ENCODE measurements at regions of chr6 and their contacts with region 1.

Region 1: GRCh38 chr6:75526502-75527127 is 33.0 kb upstream of the FILIP1 start:
- DNase-seq: no peak
- ATAC-seq: peak; percentile 89
- H3K4me3 ChIP-seq: no peak overlapping the region
- H3K27ac ChIP-seq: no peak overlapping the region
- H3K4me1 ChIP-seq: peaks cover 23% of the 10 kb centered on the region
- H3K27me3 ChIP-seq: no peaks in the 10 kb centered on the region
- CTCF ChIP-seq: peak; percentile 69

Region 2: GRCh38 chr6:75266716-75267291 is 259.8 kb before region 1 on chr6:
- intact Hi-C with region 1: loop called (anchors 10 kb)
- DNase-seq: no peak
- ATAC-seq: peak; percentile 82
- H3K4me3 ChIP-seq: no peak overlapping the region
- H3K27ac ChIP-seq: no peak overlapping the region
- H3K4me1 ChIP-seq: peaks cover 23% of the 10 kb centered on the region
- H3K27me3 ChIP-seq: no peaks in the 10 kb centered on the region
- CTCF ChIP-seq: peak; percentile 89

Region 3: DNA sequence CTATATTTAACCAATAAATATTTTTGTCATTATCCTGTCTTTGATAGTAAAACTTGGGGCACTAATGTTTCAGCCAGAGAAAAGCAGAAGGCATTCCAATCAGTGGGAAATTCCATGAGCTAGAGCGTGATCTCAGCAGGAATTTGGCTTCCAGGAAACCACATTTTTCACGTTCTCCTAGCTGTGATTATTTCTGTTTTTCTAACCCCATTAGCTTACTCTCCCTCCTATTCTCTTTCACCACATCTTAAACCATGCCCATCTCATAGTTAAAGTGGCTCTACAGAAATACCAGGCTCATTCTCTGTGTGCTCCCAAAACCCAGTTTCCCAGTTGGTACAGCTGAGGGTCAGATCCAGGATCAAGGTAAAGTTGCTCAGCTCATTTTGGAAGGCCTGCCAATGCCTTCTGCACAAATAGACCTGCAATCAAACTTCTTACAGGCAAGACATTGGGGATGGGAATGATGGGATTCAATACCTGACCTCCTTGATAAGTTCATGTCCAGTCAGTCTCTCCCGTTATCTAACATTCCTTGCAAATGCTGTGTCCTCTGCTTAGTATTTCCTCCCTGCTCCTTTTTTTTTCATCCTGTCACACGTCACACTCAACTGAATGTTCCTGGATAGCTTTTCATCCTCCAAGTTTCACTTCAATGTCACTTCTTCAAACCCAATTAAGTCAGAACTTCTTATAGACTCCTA is 209.0 kb before region 1 on chr6:
- intact Hi-C with region 1: no loop called
- DNase-seq: no peak
- ATAC-seq: no peak
- H3K4me3 ChIP-seq: no peak overlapping the region
- H3K27ac ChIP-seq: no peak overlapping the region
- H3K4me1 ChIP-seq: peaks cover 3% of the 10 kb centered on the region
- H3K27me3 ChIP-seq: no peaks in the 10 kb centered on the region
- CTCF ChIP-seq: no peak

Region 4: DNA sequence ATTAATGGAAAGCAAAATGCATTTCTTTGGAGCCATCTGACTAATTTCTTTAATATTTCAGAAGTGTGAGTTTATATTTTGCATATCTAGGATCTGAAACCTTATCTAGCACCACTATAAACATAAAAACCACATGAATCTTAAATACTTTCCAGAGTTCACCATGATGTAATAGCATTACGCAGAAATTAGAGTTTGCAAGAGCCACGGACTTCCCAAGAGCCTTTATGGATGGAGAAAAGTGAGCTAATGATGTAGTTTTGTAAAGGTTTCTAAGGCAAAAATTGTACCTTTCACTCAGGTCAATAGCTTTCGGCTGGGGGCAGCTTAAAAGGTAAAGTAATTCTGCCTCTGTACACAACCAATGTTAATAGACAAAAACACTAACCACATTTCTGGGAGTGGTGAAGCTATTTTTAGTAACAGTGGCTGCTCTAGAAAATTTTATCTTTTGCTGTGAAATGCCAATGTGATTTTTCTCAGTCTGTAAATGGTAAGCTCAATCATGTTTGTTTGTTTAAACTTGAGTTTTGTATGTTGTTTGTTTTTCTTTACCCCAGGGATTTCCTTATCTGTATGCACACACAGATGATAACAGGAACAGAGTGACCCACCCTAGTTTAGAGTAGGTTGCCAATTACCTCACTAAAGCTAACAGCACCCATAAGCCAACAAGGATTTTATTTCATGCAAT is 113.5 kb before region 1 on chr6:
- intact Hi-C with region 1: no loop called
- DNase-seq: no peak
- ATAC-seq: peak; percentile 48
- H3K4me3 ChIP-seq: no peak overlapping the region
- H3K27ac ChIP-seq: no peak overlapping the region
- H3K4me1 ChIP-seq: peaks cover 17% of the 10 kb centered on the region
- H3K27me3 ChIP-seq: no peaks in the 10 kb centered on the region
- CTCF ChIP-seq: no peak

Measured in upper lobe of right lung (tissue), 1 donor.